ENCODE measurements at regions of chr3 and their contacts with region 1.

Region 1: GRCh38 chr3:48439820-48440589 is at the starts of genes CCDC51 and TMA7:
- DNase-seq: peak; percentile 99
- ATAC-seq: peak; percentile 91
- H3K4me3 ChIP-seq: peak within 1 kb of the TSS; percentile 99
- H3K27ac ChIP-seq: peak within 1 kb of the TSS; percentile 56
- H3K4me1 ChIP-seq: peaks cover 17% of the 10 kb centered on the region
- H3K27me3 ChIP-seq: no peaks in the 10 kb centered on the region
- CTCF ChIP-seq: no peak
- total RNA-seq, gene CCDC51: 27.8 and 30.9 TPM in 2 replicates
- total RNA-seq, gene TMA7: 517 and 618 TPM in 2 replicates

Region 2: DNA sequence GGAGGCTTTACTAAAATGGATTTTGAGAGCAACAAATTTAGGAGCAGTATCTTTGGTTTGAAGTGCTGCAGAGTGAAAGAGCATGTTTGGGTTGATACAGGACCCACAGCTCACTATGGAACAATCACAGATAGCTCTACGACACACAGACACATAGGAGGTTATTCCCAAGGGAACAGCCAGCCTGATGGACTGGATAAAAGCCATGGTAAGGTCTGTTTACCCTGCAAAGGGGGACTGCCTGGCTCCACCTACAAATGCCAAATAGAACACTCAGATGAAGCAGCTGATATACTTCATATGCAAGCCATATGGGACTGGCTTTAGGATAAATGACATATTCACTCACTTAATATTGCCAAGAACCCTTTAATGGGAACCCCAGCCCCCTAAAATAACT is 327.2 kb before region 1 on chr3:
- CTCF ChIA-PET with region 1: no interaction called
- POLR2A ChIA-PET with region 1: no interaction called
- intact Hi-C with region 1: no loop called
- DNase-seq: no peak
- ATAC-seq: no peak
- H3K4me3 ChIP-seq: no peak overlapping the region
- H3K27ac ChIP-seq: no peak overlapping the region
- H3K4me1 ChIP-seq: no peaks in the 10 kb centered on the region
- H3K27me3 ChIP-seq: no peaks in the 10 kb centered on the region
- CTCF ChIP-seq: no peak

Region 3: DNA sequence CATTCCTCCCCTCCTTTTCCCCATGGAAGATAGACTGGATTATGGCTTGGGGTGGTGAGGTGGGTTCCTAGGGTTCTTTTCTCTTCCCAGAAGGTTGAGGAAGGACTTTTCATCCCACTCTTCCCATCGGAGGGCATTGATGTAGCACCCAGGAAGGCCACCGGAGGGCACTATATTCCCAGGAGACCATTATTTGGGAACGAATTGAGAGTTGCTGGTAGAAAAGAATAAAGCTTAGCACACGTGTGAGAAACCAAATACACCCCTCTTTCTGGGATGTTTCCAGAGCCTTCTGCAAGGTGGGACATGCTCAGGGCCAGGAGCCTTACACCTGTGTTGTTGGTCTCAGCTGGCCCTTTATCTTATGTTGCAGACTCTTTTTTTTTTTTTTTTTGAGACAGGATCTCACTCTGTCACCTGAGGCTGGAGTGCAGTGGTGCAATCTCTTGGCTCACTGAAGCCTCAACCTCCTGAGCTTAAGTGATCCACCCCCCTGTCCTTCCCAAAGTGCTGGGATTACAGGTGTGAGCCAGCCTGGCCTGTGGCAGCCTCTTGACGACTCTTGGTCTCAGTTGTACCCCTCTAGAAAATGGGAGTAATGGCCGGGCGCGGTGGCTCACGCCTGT is 245.4 kb before region 1 on chr3:
- CTCF ChIA-PET with region 1: interaction called, 22 read pairs
- POLR2A ChIA-PET with region 1: no interaction called
- intact Hi-C with region 1: loop called (anchors 1 kb)
- DNase-seq: peak; percentile 89
- ATAC-seq: peak; percentile 90
- H3K4me3 ChIP-seq: no peak overlapping the region; the same call in 1 of the 2 replicates
- H3K27ac ChIP-seq: no peak overlapping the region
- H3K4me1 ChIP-seq: no peaks in the 10 kb centered on the region
- H3K27me3 ChIP-seq: no peaks in the 10 kb centered on the region
- CTCF ChIP-seq: peak; percentile 95

Region 4: DNA sequence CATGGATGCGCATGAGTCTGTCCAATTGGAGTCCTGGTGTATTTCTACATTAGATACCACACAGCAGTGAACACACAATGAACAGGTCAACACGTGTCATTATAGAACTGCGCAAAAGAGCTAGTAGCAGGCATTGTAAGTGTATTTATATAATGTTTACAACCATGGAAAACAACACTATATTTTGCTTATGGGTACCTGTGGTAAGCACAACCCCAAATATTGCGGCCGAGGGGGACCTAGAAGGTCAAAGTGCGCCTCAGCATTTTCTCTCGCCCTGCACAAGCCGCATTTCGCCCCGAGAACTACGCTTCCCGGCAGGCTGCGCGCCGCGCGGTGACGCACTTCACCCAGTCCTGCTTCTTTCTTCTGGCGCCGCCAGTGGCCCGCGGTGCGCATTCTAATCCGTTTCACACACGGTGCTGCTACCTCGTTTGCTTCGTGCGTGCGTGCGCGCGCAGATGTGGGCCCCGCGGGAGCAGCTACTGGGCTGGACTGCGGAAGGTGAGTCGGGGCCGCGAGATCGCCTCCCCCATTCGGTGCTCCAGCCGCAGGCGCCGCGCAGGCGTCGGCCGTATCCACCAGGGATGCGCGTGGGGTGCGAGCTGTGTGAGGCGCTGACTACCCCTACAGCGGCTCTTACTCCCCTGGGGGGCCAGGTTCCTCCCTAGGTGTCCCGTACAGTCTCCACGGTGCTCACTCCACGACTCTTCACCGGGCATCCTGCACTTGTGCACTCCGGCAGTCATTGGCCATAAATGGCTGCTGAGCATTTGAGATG is 199.1 kb before region 1 on chr3 and contains the start of gene ZNF589:
- CTCF ChIA-PET with region 1: interaction called, 11 read pairs
- POLR2A ChIA-PET with region 1: no interaction called
- intact Hi-C with region 1: no loop called
- DNase-seq: peak; percentile 95
- ATAC-seq: peak; percentile 98
- H3K4me3 ChIP-seq: peak within 1 kb of the TSS; percentile 97
- H3K27ac ChIP-seq: peak within 1 kb of the TSS; percentile 45
- H3K4me1 ChIP-seq: peaks cover 8% of the 10 kb centered on the region; the same call in 1 of the 2 replicates
- H3K27me3 ChIP-seq: no peaks in the 10 kb centered on the region
- CTCF ChIP-seq: peak; percentile 47; the same call in 1 of the 2 replicates
- total RNA-seq, gene ZNF589: 9.4 and 10.2 TPM in 2 replicates

Region 5: GRCh38 chr3:48273594-48274211 is 166.3 kb before region 1 on chr3:
- CTCF ChIA-PET with region 1: interaction called, 69 read pairs
- POLR2A ChIA-PET with region 1: interaction called, 3 read pairs
- intact Hi-C with region 1: loop called (anchors 1 kb)
- DNase-seq: peak; percentile 83
- ATAC-seq: peak; percentile 53
- H3K4me3 ChIP-seq: no peak overlapping the region
- H3K27ac ChIP-seq: no peak overlapping the region
- H3K4me1 ChIP-seq: peaks cover 21% of the 10 kb centered on the region
- H3K27me3 ChIP-seq: no peaks in the 10 kb centered on the region
- CTCF ChIP-seq: peak; percentile 88

Region 6: DNA sequence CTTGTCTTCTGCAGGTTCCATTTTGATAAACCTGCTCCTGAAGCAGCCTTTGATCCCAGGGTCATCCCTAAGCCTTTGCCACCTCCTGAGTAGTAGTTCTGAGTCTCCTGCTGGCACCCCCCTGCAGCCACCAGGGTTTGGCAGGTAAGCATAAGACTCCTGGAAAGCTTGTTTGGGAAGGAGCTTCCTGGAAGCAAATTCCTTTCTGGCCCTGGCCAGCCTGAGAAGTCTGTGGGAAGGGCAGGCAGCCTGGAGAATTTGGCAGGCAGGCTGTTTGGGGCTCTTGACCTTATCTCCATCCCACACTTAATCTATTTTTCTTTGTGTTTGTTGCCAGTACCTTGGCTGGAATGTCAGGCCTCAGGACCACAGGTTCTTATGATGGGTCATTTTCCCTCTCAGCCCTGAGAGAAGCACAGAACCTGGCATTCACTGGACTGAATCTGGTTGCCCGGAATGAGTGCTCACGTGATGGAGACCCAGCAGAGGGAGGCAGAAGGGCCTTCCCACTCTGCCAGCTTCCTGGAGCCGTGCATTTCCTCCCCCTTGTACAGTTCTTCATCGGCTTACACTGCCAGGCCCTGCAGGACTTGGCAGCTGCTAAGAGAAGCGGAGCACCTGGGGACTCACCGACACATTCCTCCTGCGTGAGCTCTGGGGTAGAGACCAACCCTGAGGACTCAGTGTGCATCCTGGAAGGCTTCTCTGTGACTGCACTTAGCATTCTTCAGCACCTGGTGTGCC is 19.9 kb after region 1 on chr3:
- CTCF ChIA-PET with region 1: interaction called, 13 read pairs
- POLR2A ChIA-PET with region 1: no interaction called
- intact Hi-C with region 1: no loop called
- DNase-seq: no peak
- ATAC-seq: no peak
- H3K4me3 ChIP-seq: no peak overlapping the region
- H3K27ac ChIP-seq: no peak overlapping the region
- H3K4me1 ChIP-seq: peaks cover 4% of the 10 kb centered on the region
- H3K27me3 ChIP-seq: no peaks in the 10 kb centered on the region
- CTCF ChIP-seq: no peak